Thyroid gland (tissue), 4 donors: ENCODE measurements at regions of chr4 and their contacts with region 1.

Region 1: GRCh38 chr4:142846729-142847596 is 862 bp upstream of the INPP4B start:
- DNase-seq: peak; percentile 60 to 70
- H3K4me3 ChIP-seq: peak overlapping the region; percentile 37 to 71 (median 48)
- H3K27ac ChIP-seq: no peak overlapping the region
- H3K4me1 ChIP-seq: peaks cover 5 to 7% of the 10 kb centered on the region in 2 donors
- H3K27me3 ChIP-seq: no peaks in the 10 kb centered on the region
- CTCF ChIP-seq: peak in 4 of 6 experiments; percentile 15 to 54 (median 48)
- POLR2A ChIP-seq: no peak

Region 2: DNA sequence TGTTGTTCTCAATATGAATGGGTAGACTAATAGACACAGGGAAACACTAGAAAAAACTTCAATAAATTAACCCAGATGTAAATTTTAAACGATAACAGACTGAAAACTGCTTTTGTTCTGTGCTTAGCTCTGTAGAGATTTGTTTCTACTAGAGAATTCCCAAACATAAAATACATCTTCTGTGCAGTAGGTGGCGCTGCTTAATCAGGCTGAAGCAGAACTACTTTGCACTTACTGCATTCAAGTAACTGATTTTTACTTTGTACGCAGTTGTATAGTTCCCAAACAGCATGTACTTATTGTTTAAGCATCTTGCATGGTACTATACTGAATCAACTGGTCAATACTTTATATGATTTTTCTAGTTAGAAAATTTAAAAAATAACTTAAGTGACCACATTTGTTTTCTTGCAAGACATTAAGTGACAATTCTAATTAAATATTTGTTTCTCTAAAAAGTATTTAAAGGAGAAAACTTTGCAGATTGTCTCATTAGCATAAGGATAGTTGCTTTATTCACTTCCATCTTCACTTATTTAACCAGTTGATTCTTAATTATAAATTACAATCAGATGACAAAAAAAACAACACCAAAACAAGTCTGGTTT is 720.0 kb before region 1 on chr4:
- intact Hi-C with region 1: loop called (anchors 5 kb)
- DNase-seq: peak; percentile 38 to 53
- H3K4me3 ChIP-seq: no peak overlapping the region
- H3K27ac ChIP-seq: no peak overlapping the region
- H3K4me1 ChIP-seq: peaks cover 0 to 4% of the 10 kb centered on the region in 2 donors
- H3K27me3 ChIP-seq: no peaks in the 10 kb centered on the region
- CTCF ChIP-seq: peak; percentile 47 to 86 (median 68)
- POLR2A ChIP-seq: no peak

Region 3: GRCh38 chr4:142353149-142353738 is 493.7 kb before region 1 on chr4:
- intact Hi-C with region 1: loop called (anchors 10 kb)
- DNase-seq: peak in 1 of 2 donors; percentile 18
- H3K4me3 ChIP-seq: no peak overlapping the region
- H3K27ac ChIP-seq: no peak overlapping the region
- H3K4me1 ChIP-seq: peaks cover 11 to 19% of the 10 kb centered on the region in 2 donors
- H3K27me3 ChIP-seq: no peaks in the 10 kb centered on the region
- CTCF ChIP-seq: peak; percentile 59 to 96 (median 86)
- POLR2A ChIP-seq: no peak

Region 4: GRCh38 chr4:143335979-143336780 is 489.2 kb after region 1 on chr4:
- intact Hi-C with region 1: no loop called
- DNase-seq: peak; percentile 87 to 88
- H3K4me3 ChIP-seq: peak overlapping the region; percentile 46 to 93 (median 85)
- H3K27ac ChIP-seq: peak overlapping the region; percentile 95
- H3K4me1 ChIP-seq: peaks cover 0 to 5% of the 10 kb centered on the region in 2 donors
- H3K27me3 ChIP-seq: no peaks in the 10 kb centered on the region
- CTCF ChIP-seq: no peak
- POLR2A ChIP-seq: peak in 1 of 2 donors; percentile 70